ENCODE measurements at regions of chr6 and their contacts with region 1.

Region 1: DNA sequence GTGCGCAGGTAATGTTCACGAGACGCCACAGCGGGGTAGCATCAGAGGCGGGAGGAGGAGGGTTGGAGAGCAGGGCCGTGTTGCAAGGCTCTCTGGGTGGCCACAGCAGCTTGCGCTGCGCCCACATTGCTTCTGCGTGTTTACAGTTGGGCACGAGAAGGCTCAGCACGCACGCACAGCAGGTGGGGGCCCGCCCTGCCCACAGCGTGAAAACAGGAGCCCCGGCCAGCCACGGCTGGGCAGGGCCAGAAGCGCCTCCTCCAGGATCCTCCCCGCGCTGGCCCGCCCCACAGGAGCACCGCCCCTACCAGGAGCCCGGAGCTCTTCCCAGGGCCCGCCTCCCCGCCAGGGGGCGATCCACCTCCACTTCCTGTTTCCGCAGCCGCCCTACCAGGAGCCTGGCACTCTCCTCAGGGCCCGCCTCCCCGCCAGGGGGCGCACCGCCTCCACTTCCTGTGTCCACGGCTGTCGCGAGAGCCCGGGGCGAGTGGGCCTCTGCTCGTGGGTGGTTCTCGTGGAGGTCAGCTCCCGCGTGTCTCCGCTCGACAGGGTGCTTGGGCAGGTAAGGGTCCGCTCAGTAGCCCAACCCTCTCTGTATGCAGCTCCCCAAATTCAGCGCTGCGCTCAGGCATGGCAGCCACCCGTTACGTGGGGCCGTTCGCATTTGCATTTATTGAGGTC is at the start of gene FAM50B:
- DNase-seq: peak; percentile 94
- H3K4me3 Mint-ChIP-seq: peak within 1 kb of the TSS; percentile 75
- H3K27ac Mint-ChIP-seq: peak within 1 kb of the TSS; percentile 78
- H3K4me1 Mint-ChIP-seq: peaks cover 37% of the 10 kb centered on the region
- H3K27me3 Mint-ChIP-seq: no peaks in the 10 kb centered on the region
- total RNA-seq, gene FAM50B: 14.4 to 14.7 TPM

Region 2: GRCh38 chr6:3835055-3835731 is 13.9 kb before region 1 on chr6:
- CTCF ChIA-PET with region 1: interaction called, 11 read pairs
- POLR2A ChIA-PET with region 1: no interaction called
- DNase-seq: no peak
- H3K4me3 Mint-ChIP-seq: no peak overlapping the region
- H3K27ac Mint-ChIP-seq: no peak overlapping the region
- H3K4me1 Mint-ChIP-seq: no peaks in the 10 kb centered on the region
- H3K27me3 Mint-ChIP-seq: no peaks in the 10 kb centered on the region

Region 3: DNA sequence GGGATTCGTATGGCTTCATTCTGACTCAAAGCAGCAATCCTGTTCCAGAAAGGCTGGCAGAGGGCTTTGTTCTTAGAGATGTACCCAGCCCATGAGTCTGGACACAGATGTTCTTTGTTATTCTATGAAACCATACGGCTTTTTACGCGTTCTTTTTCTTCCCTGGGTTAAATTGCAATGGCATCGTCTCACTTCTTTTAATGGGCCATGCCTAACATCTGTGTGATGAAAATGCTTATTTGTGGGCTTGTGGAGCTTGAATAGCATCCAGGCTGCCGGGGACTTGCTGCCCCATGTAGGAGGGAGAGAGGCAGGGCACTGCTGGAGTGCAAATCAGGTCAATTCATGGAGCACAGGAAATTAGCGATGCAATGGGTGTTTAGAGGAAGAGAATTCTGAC is 19.5 kb after region 1 on chr6:
- CTCF ChIA-PET with region 1: interaction called, 27 read pairs
- POLR2A ChIA-PET with region 1: interaction called, 34 read pairs
- DNase-seq: no peak
- H3K4me3 Mint-ChIP-seq: no peak overlapping the region
- H3K27ac Mint-ChIP-seq: peak overlapping the region; percentile 78
- H3K4me1 Mint-ChIP-seq: peaks cover 36% of the 10 kb centered on the region
- H3K27me3 Mint-ChIP-seq: no peaks in the 10 kb centered on the region

Region 4: GRCh38 chr6:3913077-3913957 is 64.3 kb after region 1 on chr6:
- CTCF ChIA-PET with region 1: interaction called, 10 read pairs
- POLR2A ChIA-PET with region 1: interaction called, 7 read pairs
- DNase-seq: no peak
- H3K4me3 Mint-ChIP-seq: no peak overlapping the region
- H3K27ac Mint-ChIP-seq: no peak overlapping the region
- H3K4me1 Mint-ChIP-seq: peaks cover 32% of the 10 kb centered on the region
- H3K27me3 Mint-ChIP-seq: peaks cover 35% of the 10 kb centered on the region

Region 5: GRCh38 chr6:3929281-3929798 is 80.3 kb after region 1 on chr6:
- CTCF ChIA-PET with region 1: interaction called, 42 read pairs
- POLR2A ChIA-PET with region 1: interaction called, 9 read pairs
- DNase-seq: no peak
- H3K4me3 Mint-ChIP-seq: no peak overlapping the region
- H3K27ac Mint-ChIP-seq: no peak overlapping the region
- H3K4me1 Mint-ChIP-seq: no peaks in the 10 kb centered on the region
- H3K27me3 Mint-ChIP-seq: no peaks in the 10 kb centered on the region

Region 6: DNA sequence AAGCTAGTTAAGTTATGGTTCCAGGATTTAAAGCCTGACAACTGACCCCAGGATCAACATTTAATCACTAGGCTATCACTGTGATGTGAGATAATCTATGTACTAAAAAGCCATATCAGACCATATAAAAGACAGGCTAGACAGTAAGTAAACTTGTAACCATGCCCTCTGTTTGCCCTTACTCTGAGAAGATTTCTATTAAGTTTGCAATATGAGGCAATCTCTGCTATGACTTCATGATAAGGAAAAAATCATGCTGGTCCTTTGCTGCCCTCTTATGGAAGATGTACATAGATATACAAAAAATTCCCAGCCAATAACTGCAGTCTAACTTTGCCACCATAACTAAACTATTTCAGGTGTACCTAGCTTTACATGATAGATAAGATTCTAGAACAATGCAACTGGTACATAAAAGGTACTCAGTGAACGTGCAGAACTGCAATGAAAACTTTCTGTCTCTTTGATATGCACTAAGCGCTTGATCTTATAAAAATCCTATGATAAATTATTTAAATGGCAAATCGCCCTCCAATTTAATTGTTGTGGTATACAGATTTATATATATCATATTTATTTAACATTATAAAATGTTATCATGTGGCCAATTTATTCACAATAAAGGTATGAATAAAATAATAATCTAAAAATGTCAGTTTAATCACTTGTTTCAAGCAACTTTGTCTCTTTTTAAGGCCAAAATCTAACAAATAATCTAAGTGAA is 159.4 kb after region 1 on chr6:
- CTCF ChIA-PET with region 1: interaction called, 16 read pairs
- POLR2A ChIA-PET with region 1: no interaction called
- DNase-seq: no peak
- H3K4me3 Mint-ChIP-seq: no peak overlapping the region
- H3K27ac Mint-ChIP-seq: peak overlapping the region; percentile 5
- H3K4me1 Mint-ChIP-seq: peaks cover 48% of the 10 kb centered on the region
- H3K27me3 Mint-ChIP-seq: no peaks in the 10 kb centered on the region

Region 7: DNA sequence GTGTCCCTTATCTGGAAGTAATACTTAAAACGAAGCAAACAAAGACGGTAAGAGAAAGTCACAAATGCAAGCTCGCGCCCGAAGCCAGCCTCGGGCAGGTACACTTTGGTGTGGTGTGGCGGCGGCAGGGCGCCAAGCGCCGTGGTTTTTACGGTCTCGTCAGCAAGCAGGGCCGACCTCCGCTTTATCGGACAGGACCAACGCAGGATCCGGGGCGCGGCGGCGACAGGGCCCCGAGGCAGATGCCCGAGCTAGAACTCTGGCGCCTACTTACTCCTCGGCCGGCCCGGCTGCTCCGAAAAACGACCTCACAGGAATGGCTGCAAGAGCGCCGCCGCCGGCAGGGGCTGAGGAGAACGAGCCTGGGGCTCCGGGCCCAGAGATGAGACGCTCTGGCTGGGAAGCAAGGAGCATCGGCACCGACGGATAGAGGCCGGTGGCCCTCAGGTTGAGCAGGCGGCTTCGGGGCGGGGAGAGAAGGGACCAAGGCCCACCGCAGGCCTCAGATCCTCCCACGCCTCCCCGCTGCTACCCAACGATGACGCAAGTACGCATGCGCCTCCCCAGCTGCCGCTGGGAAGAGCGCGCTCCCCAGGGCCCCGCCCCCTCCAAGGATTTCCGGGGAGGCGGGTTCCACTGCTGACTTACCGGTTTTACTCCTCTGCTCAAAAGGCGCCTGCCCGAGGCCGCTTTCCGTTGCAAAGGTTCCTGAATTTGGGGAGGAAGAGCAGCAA is 169.3 kb after region 1 on chr6:
- CTCF ChIA-PET with region 1: interaction called, 23 read pairs
- POLR2A ChIA-PET with region 1: interaction called, 15 read pairs
- DNase-seq: peak; percentile 96
- H3K4me3 Mint-ChIP-seq: peak overlapping the region; percentile 90
- H3K27ac Mint-ChIP-seq: peak overlapping the region; percentile 97
- H3K4me1 Mint-ChIP-seq: peaks cover 68% of the 10 kb centered on the region
- H3K27me3 Mint-ChIP-seq: no peaks in the 10 kb centered on the region

Region 8: DNA sequence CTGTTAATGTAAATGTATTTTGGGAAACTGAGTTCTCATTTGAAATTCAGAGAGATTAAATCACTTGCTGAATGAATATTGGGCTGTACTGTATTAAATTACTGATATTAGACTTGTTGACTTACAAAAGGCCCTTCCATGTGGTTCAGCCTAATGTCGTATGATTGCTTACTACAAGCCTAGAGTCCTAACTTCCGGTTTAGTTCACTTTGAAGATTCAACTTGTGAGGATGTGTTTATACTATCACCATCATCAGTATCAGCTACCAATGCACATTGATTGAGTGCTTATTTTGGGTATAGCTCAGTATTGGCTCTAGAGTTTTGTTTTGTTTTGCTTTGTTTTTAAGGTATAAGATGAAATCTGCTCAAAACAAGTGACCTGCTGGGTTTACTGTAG is 181.6 kb after region 1 on chr6:
- CTCF ChIA-PET with region 1: no interaction called
- POLR2A ChIA-PET with region 1: no interaction called
- DNase-seq: no peak
- H3K4me3 Mint-ChIP-seq: no peak overlapping the region
- H3K27ac Mint-ChIP-seq: peak overlapping the region; percentile 10
- H3K4me1 Mint-ChIP-seq: peaks cover 66% of the 10 kb centered on the region
- H3K27me3 Mint-ChIP-seq: no peaks in the 10 kb centered on the region

Region 9: DNA sequence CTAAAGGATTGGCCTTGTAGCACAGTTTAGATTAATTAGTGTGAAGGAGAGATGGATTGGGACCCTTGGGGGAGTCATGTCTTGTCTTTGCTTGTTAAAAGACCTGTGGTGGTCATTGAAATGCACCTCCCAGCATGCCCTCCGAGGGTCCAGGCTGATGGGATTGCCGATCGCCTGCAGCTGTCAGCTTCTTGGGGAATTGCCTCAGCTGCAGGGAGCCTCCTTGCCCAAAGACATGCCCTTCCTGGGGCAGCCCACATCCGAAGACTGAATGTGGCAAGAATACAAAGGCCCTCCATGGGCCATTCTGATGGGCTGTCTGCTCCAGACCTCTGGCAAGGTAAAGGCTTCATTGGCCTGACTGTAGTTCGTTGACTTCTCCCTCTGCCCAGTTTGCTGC is 1563.0 kb after region 1 on chr6:
- CTCF ChIA-PET with region 1: no interaction called
- POLR2A ChIA-PET with region 1: no interaction called
- DNase-seq: no peak
- H3K4me3 Mint-ChIP-seq: no peak overlapping the region
- H3K27ac Mint-ChIP-seq: no peak overlapping the region
- H3K4me1 Mint-ChIP-seq: no peaks in the 10 kb centered on the region
- H3K27me3 Mint-ChIP-seq: no peaks in the 10 kb centered on the region